Ascending aorta (tissue), 2 donors: ENCODE measurements at regions of chr1 and their contacts with region 1.

Region 1: GRCh38 chr1:40849801-40850592 is 12.2 kb downstream of the CITED4 start:
- DNase-seq: peak in 1 of 2 donors; percentile 85
- H3K4me3 ChIP-seq: no peak overlapping the region
- H3K27ac ChIP-seq: peak overlapping the region in 1 of 2 donors; percentile 57
- H3K4me1 ChIP-seq: peaks cover 0 to 12% of the 10 kb centered on the region in 2 donors
- H3K27me3 ChIP-seq: no peaks in the 10 kb centered on the region
- CTCF ChIP-seq: peak; percentile 85 to 91 (median 89)

Region 2: DNA sequence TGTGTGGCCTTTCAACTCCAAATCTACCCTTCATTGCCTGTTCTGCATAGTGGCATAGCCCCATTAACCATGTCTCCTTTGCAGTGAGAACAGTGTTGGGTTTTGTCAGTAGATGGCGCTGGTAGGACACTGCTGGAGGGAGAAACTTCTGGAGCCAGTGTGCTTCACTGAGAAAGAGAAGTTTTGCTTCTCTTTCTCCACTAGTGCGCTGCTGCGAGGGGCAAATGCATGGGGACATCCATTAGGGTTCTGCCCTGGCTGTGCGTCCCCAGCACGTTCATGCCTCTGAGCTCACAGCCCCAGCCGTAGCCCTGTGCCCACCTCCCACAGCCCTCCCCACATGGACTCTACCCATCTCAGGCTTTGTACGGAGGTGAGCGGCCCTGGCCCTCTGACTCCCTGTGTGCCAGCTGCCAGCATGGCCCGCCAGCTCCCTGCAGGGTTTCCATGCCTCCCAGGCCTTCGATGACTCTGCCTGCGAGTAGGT is 237.6 kb before region 1 on chr1:
- intact Hi-C with region 1: loop called (anchors 1 kb)
- DNase-seq: peak in 1 of 2 donors; percentile 82
- H3K4me3 ChIP-seq: no peak overlapping the region
- H3K27ac ChIP-seq: no peak overlapping the region
- H3K4me1 ChIP-seq: peaks cover 0 to 2% of the 10 kb centered on the region in 2 donors
- H3K27me3 ChIP-seq: no peaks in the 10 kb centered on the region
- CTCF ChIP-seq: peak; percentile 75 to 93 (median 82)

Region 3: DNA sequence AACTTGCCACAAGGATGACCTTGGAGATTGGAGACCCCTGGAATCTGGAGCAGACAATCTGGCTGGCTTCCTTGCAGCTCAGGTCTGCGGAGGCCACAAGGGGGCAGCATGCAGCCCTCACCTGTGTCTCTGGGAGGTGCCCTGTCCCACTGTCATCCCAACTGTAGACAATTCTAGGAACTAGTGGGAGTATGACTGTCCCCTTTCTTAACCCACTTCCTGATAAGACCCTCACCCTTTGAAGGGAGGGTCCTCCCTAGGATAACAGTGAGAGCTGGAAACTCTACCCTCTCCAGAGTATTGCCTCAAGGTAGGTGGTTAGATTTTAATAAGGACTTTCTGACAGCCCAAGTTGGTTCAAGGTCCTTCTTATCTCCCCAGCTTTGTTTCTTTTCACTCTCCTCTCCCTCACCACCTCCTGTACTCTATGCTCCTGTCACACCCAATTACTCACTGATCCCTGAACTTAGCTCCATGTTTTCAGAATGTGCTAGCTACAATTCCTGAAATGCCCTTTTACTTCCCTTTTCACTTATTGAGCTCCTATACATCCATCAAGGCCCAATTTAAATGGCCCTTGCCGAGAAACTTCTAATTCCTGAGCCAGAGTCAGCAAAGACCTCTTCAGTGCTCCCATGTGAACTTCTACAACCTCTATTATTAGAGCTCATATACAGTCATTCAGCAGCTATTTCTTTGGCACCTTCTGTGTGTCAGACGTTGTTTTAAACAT is 75.6 kb before region 1 on chr1:
- intact Hi-C with region 1: loop called (anchors 1 kb)
- DNase-seq: no peak
- H3K4me3 ChIP-seq: no peak overlapping the region
- H3K27ac ChIP-seq: peak overlapping the region in 1 of 2 donors; percentile 46
- H3K4me1 ChIP-seq: no peaks in the 10 kb centered on the region
- H3K27me3 ChIP-seq: no peaks in the 10 kb centered on the region
- CTCF ChIP-seq: peak; percentile 59 to 79 (median 60)

Region 4: GRCh38 chr1:41109316-41110197 is 259.6 kb after region 1 on chr1:
- intact Hi-C with region 1: loop called (anchors 10 kb)
- DNase-seq: peak in 1 of 2 donors; percentile 76
- H3K4me3 ChIP-seq: peak overlapping the region in 1 of 2 donors; percentile 42
- H3K27ac ChIP-seq: peak overlapping the region; percentile 98 to 99
- H3K4me1 ChIP-seq: peaks cover 8 to 25% of the 10 kb centered on the region in 2 donors
- H3K27me3 ChIP-seq: no peaks in the 10 kb centered on the region
- CTCF ChIP-seq: no peak

Region 5: GRCh38 chr1:41842993-41843755 is 993.2 kb after region 1 on chr1:
- intact Hi-C with region 1: no loop called
- DNase-seq: no peak
- H3K4me3 ChIP-seq: no peak overlapping the region
- H3K27ac ChIP-seq: no peak overlapping the region
- H3K4me1 ChIP-seq: peaks cover 0 to 3% of the 10 kb centered on the region in 2 donors
- H3K27me3 ChIP-seq: no peaks in the 10 kb centered on the region
- CTCF ChIP-seq: no peak